ENCODE measurements at regions of chr12 and their contacts with region 1.

Region 1: DNA sequence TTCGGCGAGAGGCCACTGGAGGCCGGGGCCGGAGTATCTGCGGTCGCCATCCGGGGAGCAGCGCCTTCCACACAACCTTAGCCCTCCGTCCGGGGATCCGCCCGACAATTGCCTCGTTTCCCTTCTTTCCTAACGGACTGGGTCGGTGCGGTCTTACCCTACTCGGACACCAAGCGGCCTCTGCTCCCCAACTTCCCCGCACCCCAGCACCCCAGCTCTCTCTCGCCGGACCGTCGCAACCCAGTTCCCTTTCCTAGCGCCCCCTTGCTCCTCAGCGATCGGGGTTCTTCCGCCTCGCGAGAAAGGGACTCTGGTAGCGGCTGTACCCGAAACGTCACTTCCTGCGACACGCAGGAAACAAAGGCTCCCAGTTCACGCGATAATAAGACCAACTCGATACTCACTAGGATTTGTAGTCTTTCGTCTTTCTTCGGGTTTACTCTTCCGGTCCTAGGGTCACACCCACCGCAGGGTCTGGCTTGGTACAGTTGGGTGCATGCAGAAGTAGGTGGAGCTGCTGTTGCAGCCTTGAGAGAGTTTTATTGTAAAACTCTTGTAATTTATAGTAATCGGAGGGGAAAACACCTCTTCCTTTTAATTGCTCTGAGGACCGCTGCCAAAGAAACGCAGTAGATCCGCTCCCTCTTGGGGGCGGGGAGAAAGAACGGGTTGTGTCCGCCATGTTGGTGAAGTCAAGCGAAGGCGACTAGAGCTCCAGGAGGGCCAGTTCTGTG is at the start of gene ZFC3H1:
- DNase-seq: peak; percentile 98
- ATAC-seq: peak; percentile 82
- H3K4me3 ChIP-seq: peak within 1 kb of the TSS; percentile 82 to 97 (median 88)
- H3K4me3 Mint-ChIP-seq: peak within 1 kb of the TSS; percentile 96
- H3K27ac ChIP-seq: peak within 1 kb of the TSS; percentile 93 to 97
- H3K27ac Mint-ChIP-seq: peak within 1 kb of the TSS; percentile 100
- H3K4me1 ChIP-seq: peaks cover 28% of the 10 kb centered on the region in 2 donors
- H3K4me1 Mint-ChIP-seq: peaks cover 57% of the 10 kb centered on the region
- H3K27me3 ChIP-seq: no peaks in the 10 kb centered on the region
- H3K27me3 Mint-ChIP-seq: no peaks in the 10 kb centered on the region
- CTCF ChIP-seq: peak; percentile 17
- total RNA-seq, gene ZFC3H1: 141 and 154 TPM in 2 replicates

Region 2: DNA sequence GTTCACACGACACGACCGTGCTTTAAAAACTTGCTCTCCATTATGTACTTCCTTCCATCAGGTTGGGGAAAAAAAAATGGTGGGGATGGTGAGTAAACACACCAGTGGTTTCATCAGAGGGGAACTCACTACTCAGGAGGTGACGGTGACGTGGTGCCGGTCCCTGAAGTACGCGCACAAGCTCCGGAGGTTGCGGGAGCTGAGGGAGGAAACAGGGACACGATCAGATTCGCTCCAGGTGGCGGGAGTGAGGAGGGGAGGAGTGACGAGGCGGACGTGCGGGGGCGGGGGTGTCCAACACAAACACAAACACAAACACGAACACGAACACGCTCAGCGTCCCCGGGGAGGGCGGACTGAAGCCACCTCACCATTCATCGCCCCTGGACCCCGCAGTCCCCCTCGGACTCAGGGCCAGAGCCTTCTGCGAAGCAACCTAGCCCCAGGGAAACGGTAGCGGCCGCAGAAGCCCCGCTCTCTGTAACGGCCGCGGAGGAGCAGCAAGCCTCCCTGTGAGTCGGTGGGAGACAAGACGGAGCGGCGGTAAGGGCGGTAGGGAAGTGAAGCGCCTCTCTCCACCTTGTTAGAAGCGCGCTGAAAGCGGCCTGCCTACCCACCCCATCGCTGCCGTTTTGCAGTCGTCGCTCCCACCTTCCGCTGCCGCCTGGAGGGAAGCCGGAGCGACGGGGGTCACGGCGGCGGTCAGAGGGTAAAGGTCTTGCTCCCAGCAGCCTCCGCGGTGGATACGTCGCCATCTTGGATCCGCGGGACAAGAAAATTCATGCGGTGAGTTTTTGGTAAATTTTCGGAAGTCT is 1420.8 kb before region 1 on chr12 and contains the start of gene CNOT2:
- CTCF ChIA-PET with region 1: no interaction called
- POLR2A ChIA-PET with region 1: no interaction called
- intact Hi-C with region 1: loop called (anchors 2 kb)
- DNase-seq: peak; percentile 93
- ATAC-seq: peak; percentile 88
- H3K4me3 ChIP-seq: peak within 1 kb of the TSS; percentile 75 to 92 (median 85)
- H3K4me3 Mint-ChIP-seq: peak within 1 kb of the TSS; percentile 96
- H3K27ac ChIP-seq: peak within 1 kb of the TSS; percentile 95 to 98
- H3K27ac Mint-ChIP-seq: peak within 1 kb of the TSS; percentile 97
- H3K4me1 ChIP-seq: peaks cover 20 to 33% of the 10 kb centered on the region in 2 donors
- H3K4me1 Mint-ChIP-seq: peaks cover 57% of the 10 kb centered on the region
- H3K27me3 ChIP-seq: no peaks in the 10 kb centered on the region
- H3K27me3 Mint-ChIP-seq: no peaks in the 10 kb centered on the region
- CTCF ChIP-seq: no peak
- total RNA-seq, gene CNOT2: 115 and 120 TPM in 2 replicates

Region 3: GRCh38 chr12:71354871-71355270 is 308.9 kb before region 1 on chr12:
- CTCF ChIA-PET with region 1: no interaction called
- POLR2A ChIA-PET with region 1: no interaction called
- intact Hi-C with region 1: no loop called
- DNase-seq: no peak
- ATAC-seq: no peak
- H3K4me3 ChIP-seq: no peak overlapping the region
- H3K4me3 Mint-ChIP-seq: no peak overlapping the region
- H3K27ac ChIP-seq: no peak overlapping the region
- H3K27ac Mint-ChIP-seq: no peak overlapping the region
- H3K4me1 ChIP-seq: no peaks in the 10 kb centered on the region
- H3K4me1 Mint-ChIP-seq: no peaks in the 10 kb centered on the region
- H3K27me3 ChIP-seq: no peaks in the 10 kb centered on the region
- H3K27me3 Mint-ChIP-seq: peaks cover 6% of the 10 kb centered on the region
- CTCF ChIP-seq: no peak

Region 4: DNA sequence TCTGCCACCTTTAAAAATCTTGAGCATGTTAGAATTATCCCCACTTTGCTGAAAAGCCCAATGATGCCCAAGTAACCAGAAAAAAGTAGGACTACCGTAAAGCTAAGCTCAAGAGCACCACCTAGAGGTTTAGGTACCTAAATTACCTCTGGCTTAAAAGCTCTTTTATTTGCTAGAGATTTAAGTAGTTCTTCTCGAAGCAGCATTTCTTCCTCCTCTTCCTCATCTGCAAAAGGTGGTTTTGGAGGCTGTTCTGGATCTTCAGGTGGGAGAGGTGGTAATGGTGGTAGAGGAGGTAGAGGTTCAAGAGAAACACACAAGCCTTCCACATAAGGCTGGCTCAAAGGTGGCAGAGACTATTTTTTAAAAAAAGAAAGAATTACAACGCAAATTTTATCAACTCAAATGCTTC is 27.0 kb before region 1 on chr12:
- CTCF ChIA-PET with region 1: interaction called, 18 read pairs
- POLR2A ChIA-PET with region 1: interaction called, 4 read pairs
- intact Hi-C with region 1: loop called (anchors 2 kb)
- DNase-seq: peak; percentile 75
- ATAC-seq: peak; percentile 54
- H3K4me3 ChIP-seq: no peak overlapping the region
- H3K4me3 Mint-ChIP-seq: no peak overlapping the region
- H3K27ac ChIP-seq: no peak overlapping the region
- H3K27ac Mint-ChIP-seq: no peak overlapping the region
- H3K4me1 ChIP-seq: no peaks in the 10 kb centered on the region
- H3K4me1 Mint-ChIP-seq: peaks cover 4% of the 10 kb centered on the region
- H3K27me3 ChIP-seq: no peaks in the 10 kb centered on the region
- H3K27me3 Mint-ChIP-seq: no peaks in the 10 kb centered on the region
- CTCF ChIP-seq: peak; percentile 92

Region 5: GRCh38 chr12:71694099-71694820 is 30.5 kb after region 1 on chr12:
- CTCF ChIA-PET with region 1: interaction called, 13 read pairs
- POLR2A ChIA-PET with region 1: interaction called, 16 read pairs
- intact Hi-C with region 1: loop called (anchors 1 kb)
- DNase-seq: peak; percentile 73
- ATAC-seq: peak; percentile 84
- H3K4me3 ChIP-seq: peak overlapping the region in 4 of 5 experiments; percentile 10 to 34 (median 25)
- H3K4me3 Mint-ChIP-seq: peak overlapping the region; percentile 72
- H3K27ac ChIP-seq: peak overlapping the region; percentile 86 to 95
- H3K27ac Mint-ChIP-seq: peak overlapping the region; percentile 88
- H3K4me1 ChIP-seq: peaks cover 72 to 76% of the 10 kb centered on the region in 2 donors
- H3K4me1 Mint-ChIP-seq: peaks cover 69% of the 10 kb centered on the region
- H3K27me3 ChIP-seq: no peaks in the 10 kb centered on the region
- H3K27me3 Mint-ChIP-seq: no peaks in the 10 kb centered on the region
- CTCF ChIP-seq: no peak

Region 6: DNA sequence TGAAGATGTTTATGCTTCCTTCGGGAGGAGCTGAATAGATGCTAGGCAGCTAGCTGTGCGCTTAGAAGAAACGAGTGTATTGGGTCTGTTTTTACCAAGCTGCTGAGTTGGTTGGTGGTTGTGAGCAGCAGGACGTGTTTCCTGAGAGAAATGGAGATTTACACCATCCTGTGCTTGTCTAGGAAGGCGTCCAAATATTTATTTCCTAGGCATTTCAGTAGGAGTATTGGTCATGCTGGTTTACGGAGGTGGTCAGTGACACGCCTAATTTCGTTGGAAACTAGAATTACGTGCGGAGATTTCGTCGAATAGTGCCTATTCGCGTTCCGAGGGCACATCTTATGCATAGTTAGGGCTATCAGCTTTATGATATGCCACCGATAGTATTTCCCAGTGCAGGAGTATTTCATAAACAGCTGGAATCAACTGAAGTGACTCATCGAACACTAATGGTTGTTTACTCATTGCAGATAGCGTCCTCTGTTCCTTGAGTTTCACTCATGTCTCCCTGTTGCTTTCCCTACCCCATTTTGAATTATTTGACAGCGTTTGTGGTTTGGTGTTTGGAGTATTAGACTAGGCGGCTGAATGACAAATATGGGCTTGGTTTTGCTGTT is 176.6 kb after region 1 on chr12:
- CTCF ChIA-PET with region 1: interaction called, 3 read pairs
- POLR2A ChIA-PET with region 1: interaction called, 6 read pairs
- intact Hi-C with region 1: loop called (anchors 10 kb)
- DNase-seq: no peak
- ATAC-seq: no peak
- H3K4me3 ChIP-seq: peak overlapping the region; percentile 61 to 90 (median 80)
- H3K4me3 Mint-ChIP-seq: peak overlapping the region; percentile 94
- H3K27ac ChIP-seq: peak overlapping the region; percentile 99
- H3K27ac Mint-ChIP-seq: peak overlapping the region; percentile 95
- H3K4me1 ChIP-seq: peaks cover 21% of the 10 kb centered on the region in 2 donors
- H3K4me1 Mint-ChIP-seq: peaks cover 33% of the 10 kb centered on the region
- H3K27me3 ChIP-seq: no peaks in the 10 kb centered on the region
- H3K27me3 Mint-ChIP-seq: peaks cover 2% of the 10 kb centered on the region
- CTCF ChIP-seq: no peak